Right cardiac atrium (tissue), 5 donors: ENCODE measurements at regions of chr2 and their contacts with region 1.

Region 1: DNA sequence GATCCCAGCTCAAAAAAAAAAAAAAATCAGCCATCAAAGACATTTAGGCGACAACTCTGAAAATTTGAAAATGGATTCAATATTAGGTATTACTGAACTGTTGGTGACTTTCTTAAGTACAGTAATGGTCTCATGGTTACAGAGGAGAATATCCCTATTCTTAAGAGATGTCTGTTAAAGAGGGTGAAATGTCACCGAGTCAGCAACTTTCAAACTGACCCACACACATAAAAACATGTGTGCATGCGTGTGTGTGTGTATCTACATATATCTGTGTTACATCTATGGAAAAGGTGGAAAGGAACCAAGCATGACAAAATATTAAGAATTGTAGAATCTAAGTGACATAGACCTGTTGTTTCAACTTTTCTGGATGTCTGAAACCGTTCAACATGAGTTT is 41.6 kb upstream of the GLI2 start:
- DNase-seq: no peak
- ATAC-seq: no peak
- H3K4me3 ChIP-seq: no peak overlapping the region
- H3K27ac ChIP-seq: no peak overlapping the region
- H3K4me1 ChIP-seq: no peaks in the 10 kb centered on the region
- H3K27me3 ChIP-seq: no peaks in the 10 kb centered on the region

Region 2: GRCh38 chr2:121071034-121071504 is 377.0 kb after region 1 on chr2:
- intact Hi-C with region 1: loop called (anchors 2 to 5 kb)
- DNase-seq: peak; percentile 74 to 93 (median 88)
- ATAC-seq: peak; percentile 66 to 71
- H3K4me3 ChIP-seq: no peak overlapping the region
- H3K27ac ChIP-seq: no peak overlapping the region
- H3K4me1 ChIP-seq: no peaks in the 10 kb centered on the region
- H3K27me3 ChIP-seq: no peaks in the 10 kb centered on the region

Region 3: DNA sequence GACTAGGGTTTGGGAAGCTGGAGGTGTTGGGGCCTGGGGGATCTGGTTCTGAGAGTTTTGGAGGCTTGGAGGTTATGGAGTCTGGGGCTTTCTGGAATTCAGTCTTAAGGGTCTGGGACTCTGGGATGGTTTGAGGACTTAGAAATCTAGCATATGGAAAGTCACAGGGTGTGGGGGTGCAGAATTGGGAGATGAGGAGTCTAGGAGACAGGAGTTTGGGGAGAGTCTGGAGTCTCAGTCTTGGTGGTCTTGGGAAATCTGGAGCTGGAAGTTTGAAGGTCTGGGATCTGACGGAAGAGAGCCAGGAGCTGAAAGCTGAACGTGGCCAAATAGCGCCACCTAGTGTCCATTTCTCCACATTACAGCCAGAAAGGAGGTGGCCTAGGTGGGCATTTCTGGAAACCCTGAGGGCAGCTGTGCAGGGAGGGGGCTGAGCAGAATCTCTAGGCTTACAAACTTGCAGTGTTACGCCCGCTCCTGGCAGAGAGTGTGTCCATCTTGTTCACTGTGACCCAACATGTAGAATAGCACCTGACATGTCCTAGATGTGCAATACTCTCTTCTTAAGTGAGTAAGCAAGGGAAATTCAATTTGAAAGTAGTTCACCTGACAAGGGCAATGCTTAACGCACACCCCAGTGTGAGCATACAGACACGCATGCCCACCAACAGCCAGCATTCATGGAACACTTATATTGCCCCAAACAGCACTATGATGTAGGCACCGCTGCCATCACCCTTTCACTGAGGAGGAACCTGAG is 386.2 kb after region 1 on chr2:
- intact Hi-C with region 1: loop called in 1 of 4 experiments (anchors 2 kb)
- DNase-seq: peak in 2 of 3 donors; percentile 38 to 71
- ATAC-seq: peak; percentile 38 to 43
- H3K4me3 ChIP-seq: no peak overlapping the region
- H3K27ac ChIP-seq: no peak overlapping the region
- H3K4me1 ChIP-seq: no peaks in the 10 kb centered on the region
- H3K27me3 ChIP-seq: no peaks in the 10 kb centered on the region